Dendritic cell treated with granulocyte-macrophage colony-stimulating factor and Interleukin-4, amounts not matched to agents 40 ng/mL and 50 ng/mL, for 4 days (primary cell): ENCODE measurements at regions of chr21 and their contacts with region 1.

Region 1: DNA sequence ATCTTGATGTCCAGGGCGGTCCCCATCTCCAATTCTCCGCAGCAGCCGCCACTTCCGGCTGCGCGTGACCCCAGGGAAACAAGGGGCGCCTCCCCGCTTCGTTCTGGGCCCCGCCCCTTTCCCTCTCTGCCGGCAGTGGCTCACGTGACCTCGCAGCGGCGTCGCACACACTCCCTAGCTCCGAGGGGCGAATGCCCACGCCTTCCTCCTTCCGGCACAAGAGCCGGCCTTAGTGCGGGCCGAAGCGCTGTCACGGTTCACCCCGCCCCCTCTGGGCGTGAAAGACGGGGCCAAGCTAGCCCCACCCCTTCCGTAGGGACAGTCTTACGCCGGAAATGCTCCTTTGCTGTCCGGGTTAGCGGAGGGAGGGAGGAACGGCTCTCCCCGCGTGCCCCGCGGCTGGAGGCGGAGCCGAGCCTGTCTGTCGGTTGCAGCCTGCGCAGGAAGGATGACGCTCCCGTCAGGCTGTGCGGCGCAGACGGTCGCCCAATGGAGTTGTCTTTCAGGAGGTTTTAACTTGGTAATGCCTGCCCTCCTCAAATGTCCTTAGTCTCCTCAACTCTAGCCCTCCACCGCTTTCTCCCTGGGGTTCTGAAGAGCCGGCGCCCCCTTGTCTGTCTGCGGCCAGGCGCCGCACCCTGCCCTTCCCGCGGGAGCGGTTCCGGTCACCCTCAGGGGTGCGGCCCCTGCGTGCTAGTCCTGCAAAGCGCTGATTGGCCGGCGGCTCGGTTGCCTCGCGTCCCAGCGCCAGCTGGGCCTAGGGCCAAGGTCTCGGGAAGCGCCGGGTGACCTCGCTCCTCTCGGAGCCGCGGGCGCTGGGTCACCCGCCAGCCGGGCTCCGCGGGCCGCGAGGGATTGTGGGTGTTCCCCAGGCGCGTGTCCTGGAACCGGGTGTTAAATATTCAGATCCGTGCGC is at the start of gene VPS26C:
- H3K4me3 Mint-ChIP-seq: peak within 1 kb of the TSS; percentile 88
- H3K27ac Mint-ChIP-seq: peak within 1 kb of the TSS; percentile 99
- H3K4me1 Mint-ChIP-seq: peaks cover 19% of the 10 kb centered on the region
- H3K27me3 Mint-ChIP-seq: no peaks in the 10 kb centered on the region

Region 2: GRCh38 chr21:37130971-37131370 is 136.6 kb before region 1 on chr21:
- intact Hi-C with region 1: no loop called
- H3K4me3 Mint-ChIP-seq: no peak overlapping the region
- H3K27ac Mint-ChIP-seq: no peak overlapping the region
- H3K4me1 Mint-ChIP-seq: no peaks in the 10 kb centered on the region
- H3K27me3 Mint-ChIP-seq: no peaks in the 10 kb centered on the region

Region 3: GRCh38 chr21:37435120-37435519 is 167.6 kb after region 1 on chr21:
- intact Hi-C with region 1: loop called (anchors 10 kb)
- H3K4me3 Mint-ChIP-seq: no peak overlapping the region
- H3K27ac Mint-ChIP-seq: no peak overlapping the region
- H3K4me1 Mint-ChIP-seq: peaks cover 43% of the 10 kb centered on the region
- H3K27me3 Mint-ChIP-seq: no peaks in the 10 kb centered on the region

Region 4: GRCh38 chr21:37463083-37463801 is 195.7 kb after region 1 on chr21:
- intact Hi-C with region 1: no loop called
- H3K4me3 Mint-ChIP-seq: no peak overlapping the region
- H3K27ac Mint-ChIP-seq: no peak overlapping the region
- H3K4me1 Mint-ChIP-seq: peaks cover 44% of the 10 kb centered on the region
- H3K27me3 Mint-ChIP-seq: no peaks in the 10 kb centered on the region

Region 5: DNA sequence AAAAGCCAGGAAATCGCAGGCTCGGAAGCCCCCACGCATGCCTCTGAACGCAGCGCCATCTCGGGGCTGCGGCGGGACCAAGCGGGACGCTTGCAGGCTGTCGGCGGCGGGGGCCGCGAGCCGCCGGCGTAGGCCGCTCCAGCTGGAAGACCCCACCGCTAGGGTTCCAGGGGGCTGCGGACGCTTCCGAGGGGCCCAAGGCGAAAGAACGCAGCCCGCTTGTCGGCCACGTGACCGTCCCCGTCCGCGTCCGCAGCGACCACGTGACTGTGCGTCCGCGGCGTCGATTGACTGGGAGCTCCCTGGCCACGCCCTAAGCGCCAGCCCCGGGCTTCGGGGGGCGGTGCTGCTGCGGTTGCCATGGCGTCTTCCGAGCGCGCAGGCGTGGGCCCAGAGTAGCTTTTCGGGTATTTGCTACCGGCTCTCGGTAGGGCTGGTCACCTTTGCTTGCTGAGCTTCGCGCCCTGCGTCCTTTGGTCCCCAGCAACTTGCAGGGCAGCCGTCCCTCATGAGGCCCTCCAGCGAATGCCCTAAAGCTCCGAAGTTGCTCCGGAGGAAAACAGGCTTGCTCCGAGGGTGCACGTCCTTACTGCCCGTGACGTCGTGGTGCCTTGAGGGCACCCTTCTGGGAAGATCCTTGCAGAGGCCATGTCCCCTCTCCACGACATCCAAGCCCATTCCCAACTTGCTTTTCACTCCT is 296.3 kb after region 1 on chr21:
- intact Hi-C with region 1: loop called (anchors 5 kb)
- H3K4me3 Mint-ChIP-seq: peak overlapping the region; percentile 88
- H3K27ac Mint-ChIP-seq: peak overlapping the region; percentile 92
- H3K4me1 Mint-ChIP-seq: peaks cover 30% of the 10 kb centered on the region
- H3K27me3 Mint-ChIP-seq: peaks cover 6% of the 10 kb centered on the region